ENCODE measurements at regions of chr16 and their contacts with region 1.

Region 1: DNA sequence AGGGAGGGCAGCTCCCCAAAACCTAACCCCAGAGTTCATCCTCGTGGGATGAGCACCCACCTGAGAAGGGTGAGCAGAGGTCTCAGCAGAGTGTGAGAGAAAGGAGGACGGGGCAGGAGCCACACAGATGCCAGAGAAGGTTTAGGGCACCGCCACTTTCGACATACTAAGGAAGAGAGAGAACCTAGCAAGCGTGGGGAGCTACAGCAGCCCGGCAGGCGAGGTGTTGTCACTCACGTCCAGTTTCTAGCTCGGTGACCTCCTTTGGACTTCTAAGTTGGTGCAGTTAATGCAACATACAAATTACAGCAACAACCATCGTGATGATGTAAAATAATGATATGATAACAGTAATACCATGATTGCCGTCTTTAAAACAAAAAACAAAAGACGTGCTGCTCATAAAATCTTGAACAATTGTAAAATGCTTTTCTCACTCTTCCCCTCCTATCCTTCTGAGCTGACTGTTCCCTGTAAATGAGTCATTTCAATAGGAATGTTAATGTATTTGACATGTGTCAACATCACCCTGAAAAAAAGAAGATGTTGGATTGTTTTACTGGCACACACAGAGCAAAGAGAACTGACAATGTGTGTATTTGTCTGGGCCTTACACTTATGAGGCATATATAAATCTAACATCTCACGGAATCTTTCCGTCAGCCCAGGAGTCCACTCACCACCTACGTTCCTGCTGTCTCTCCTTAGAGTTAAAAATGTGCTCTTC is 158.2 kb upstream of the MAF start:
- DNase-seq: no peak
- H3K4me3 Mint-ChIP-seq: no peak overlapping the region
- H3K27ac Mint-ChIP-seq: no peak overlapping the region
- H3K4me1 Mint-ChIP-seq: peaks cover 37% of the 10 kb centered on the region
- H3K27me3 Mint-ChIP-seq: peaks cover 4% of the 10 kb centered on the region

Region 2: GRCh38 chr16:79713609-79714309 is 45.0 kb before region 1 on chr16:
- CTCF ChIA-PET with region 1: no interaction called
- POLR2A ChIA-PET with region 1: no interaction called
- intact Hi-C with region 1: loop called (anchors 2 kb)
- DNase-seq: peak; percentile 43
- H3K4me3 Mint-ChIP-seq: peak overlapping the region; percentile 54
- H3K27ac Mint-ChIP-seq: peak overlapping the region; percentile 61
- H3K4me1 Mint-ChIP-seq: peaks cover 25% of the 10 kb centered on the region
- H3K27me3 Mint-ChIP-seq: peaks cover 4% of the 10 kb centered on the region

Region 3: DNA sequence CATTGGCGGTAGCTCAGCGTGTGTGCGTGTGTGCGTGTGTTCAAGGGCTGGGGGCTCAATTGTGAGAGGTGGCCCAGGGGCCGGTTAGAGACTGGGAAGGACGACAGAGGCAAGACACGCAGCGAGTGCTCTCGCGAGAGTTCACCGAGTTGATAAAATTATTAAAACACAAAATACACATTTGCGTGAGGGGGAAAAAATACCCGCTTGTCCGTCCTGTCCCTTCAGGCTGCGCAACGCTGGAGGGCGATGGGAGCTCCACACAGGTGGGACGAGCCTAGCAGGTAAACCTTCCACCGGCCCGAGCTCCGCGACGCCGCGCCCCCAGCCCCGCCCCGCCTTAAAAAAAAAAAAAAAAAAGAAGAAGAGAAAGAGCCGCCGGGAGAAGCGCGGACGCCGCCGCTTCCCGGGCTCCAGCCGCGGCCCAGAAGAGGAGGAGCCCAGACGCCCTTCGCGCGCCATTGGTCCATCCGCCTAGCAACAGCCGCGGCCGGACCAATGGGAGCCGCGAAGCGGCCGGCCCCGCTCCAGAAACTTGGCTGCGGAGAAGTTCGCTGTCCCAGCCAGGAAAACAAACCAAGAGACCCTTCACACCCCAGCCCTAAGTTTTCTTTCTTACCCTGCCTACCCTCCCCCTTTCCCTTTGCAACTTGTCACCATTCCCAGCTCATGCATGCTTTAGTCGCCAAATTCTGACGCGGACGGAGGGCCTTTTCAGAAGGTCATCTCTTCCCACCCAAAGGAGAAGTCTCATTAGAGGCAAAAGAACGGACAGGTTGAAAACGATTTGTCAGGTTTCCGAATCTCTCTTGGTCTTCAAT is 11.7 kb after region 1 on chr16:
- CTCF ChIA-PET with region 1: no interaction called
- POLR2A ChIA-PET with region 1: interaction called, 5 read pairs
- intact Hi-C with region 1: loop called (anchors 1 kb)
- DNase-seq: peak; percentile 84
- H3K4me3 Mint-ChIP-seq: peak overlapping the region; percentile 73
- H3K27ac Mint-ChIP-seq: peak overlapping the region; percentile 50
- H3K4me1 Mint-ChIP-seq: peaks cover 17% of the 10 kb centered on the region
- H3K27me3 Mint-ChIP-seq: peaks cover 1% of the 10 kb centered on the region